ENCODE measurements at regions of chr6 and their contacts with region 1.

Region 1: GRCh38 chr6:13795041-13795750 is 19.2 kb downstream of the MCUR1 start:
- DNase-seq: peak; percentile 72 to 85
- ATAC-seq: peak; percentile 70 to 91 (median 87)
- H3K4me3 ChIP-seq: no peak overlapping the region
- H3K27ac ChIP-seq: no peak overlapping the region
- H3K4me1 ChIP-seq: peaks cover 0 to 15% (median 6%) of the 10 kb centered on the region in 9 donors
- H3K27me3 ChIP-seq: no peaks in the 10 kb centered on the region
- CTCF ChIP-seq: peak in 8 of 9 donors; percentile 84 to 95 (median 92)

Region 2: GRCh38 chr6:13873285-13874190 is 78.3 kb after region 1 on chr6:
- intact Hi-C with region 1: loop called in 2 of 10 experiments (anchors 10 kb)
- DNase-seq: peak; percentile 52 to 64
- ATAC-seq: peak; percentile 38 to 79 (median 70)
- H3K4me3 ChIP-seq: peak overlapping the region in 9 of 10 donors; percentile 34 to 64 (median 54)
- H3K27ac ChIP-seq: no peak overlapping the region
- H3K4me1 ChIP-seq: peaks cover 7 to 16% (median 10%) of the 10 kb centered on the region in 9 donors
- H3K27me3 ChIP-seq: peaks cover 0 to 2% (median 0%) of the 10 kb centered on the region in 7 donors
- CTCF ChIP-seq: peak; percentile 25 to 79 (median 65)

Region 3: DNA sequence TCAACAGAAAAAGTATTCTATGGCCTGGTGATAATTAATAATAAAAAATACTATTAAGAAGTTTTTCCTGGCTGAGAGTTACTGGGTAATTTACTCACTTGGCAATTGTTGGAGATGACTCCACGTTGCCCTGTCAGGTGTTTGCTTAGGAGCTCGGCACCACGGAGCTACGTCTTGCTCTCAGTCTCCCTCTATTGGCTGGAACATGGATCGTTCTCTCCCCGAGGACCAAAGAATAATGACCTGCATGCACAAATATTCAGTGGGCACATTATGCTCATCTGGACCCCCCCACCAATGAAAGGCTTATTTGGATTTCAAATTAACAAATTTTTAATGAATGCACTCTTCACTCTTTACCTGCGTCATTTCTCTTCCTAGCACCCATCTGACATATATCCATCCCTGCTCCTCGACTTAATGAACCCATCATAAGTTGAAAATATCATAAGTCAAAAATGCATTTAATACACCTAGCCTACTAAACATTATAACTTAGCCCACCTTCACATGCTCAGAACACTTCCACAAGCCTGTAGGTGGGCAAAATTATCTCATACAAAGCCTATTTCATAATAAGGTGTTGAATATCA is 251.4 kb after region 1 on chr6:
- intact Hi-C with region 1: loop called in 2 of 10 experiments (anchors 5 kb)
- DNase-seq: no peak
- ATAC-seq: peak in 1 of 8 donors; percentile 43
- H3K4me3 ChIP-seq: no peak overlapping the region
- H3K27ac ChIP-seq: no peak overlapping the region
- H3K4me1 ChIP-seq: no peaks in the 10 kb centered on the region
- H3K27me3 ChIP-seq: peaks cover 0 to 43% (median 24%) of the 10 kb centered on the region in 7 donors
- CTCF ChIP-seq: peak; percentile 27 to 71 (median 63)

Region 4: DNA sequence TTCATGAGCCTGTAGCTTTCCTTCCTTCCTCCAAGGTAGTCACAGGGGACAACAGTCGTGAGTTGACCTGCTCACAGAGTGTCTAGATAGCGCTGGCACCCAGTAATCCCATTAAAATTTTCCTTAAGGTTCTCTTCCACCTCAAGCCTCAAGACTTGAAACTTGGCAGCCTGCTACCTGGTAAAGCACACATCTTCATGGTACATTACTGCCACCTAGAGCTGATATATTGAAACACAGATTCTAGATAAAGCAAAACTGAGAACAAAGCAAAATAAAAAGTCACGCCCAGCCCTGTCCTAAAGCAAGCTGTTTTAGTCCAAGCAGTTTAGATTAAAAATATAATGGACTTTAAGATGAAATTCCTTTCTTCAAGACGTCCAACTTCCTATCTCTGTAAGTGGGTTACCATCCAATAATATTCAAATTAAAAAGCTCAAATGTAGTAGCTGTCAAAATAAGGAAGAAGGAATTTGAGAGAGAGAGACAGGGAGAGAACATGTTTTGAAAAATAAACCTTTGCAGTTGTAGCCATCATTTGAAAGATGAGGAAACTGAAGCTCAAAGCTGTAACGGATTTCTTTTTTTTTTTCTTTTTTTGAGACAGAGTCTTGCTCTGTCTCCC is 271.7 kb after region 1 on chr6:
- intact Hi-C with region 1: loop called in 8 of 10 experiments (anchors 2 to 10 kb)
- DNase-seq: peak in 1 of 2 donors; percentile 19
- ATAC-seq: peak in 7 of 8 donors; percentile 49 to 81 (median 71)
- H3K4me3 ChIP-seq: no peak overlapping the region
- H3K27ac ChIP-seq: no peak overlapping the region
- H3K4me1 ChIP-seq: no peaks in the 10 kb centered on the region
- H3K27me3 ChIP-seq: peaks cover 0 to 22% (median 0%) of the 10 kb centered on the region in 7 donors
- CTCF ChIP-seq: peak; percentile 36 to 77 (median 71)

Measured in heart right ventricle (tissue), 16 donors.